ENCODE measurements at regions of chr10 and their contacts with region 1.

Region 1: DNA sequence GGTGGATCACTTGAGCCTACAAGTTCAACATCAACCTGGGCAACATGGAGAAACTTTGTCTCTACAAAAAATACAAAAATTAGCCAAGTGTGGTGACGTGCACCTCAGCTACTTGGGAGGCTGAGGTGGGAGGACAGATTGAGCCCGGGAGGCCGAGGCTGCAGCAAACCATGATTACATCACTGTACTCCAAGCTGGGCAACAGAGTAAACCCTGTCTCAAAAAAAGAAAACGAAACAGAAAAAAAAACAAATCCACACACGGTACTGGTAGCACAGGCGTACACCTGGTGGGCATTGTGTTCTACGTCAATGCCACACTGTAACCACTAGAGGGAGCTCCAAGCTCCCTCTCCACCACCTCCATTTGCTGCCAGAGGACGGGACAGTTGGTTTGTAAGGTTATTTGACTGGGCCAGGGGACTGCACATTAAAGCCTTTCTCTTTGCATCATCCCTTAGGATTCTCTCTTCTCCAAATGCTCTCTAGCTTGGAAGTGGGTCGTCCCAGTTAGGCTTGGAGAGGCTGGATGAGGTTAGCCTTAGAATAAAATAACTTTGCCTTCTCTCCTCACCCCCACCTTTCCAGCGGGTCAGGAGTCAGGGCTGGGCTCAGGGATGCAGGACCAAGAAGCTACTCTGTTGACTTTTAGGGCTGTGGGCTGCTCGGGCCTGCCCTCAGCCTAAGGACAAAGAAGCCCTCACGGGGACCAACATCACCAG is 130.8 kb downstream of the SORBS1 start:
- DNase-seq: no peak
- H3K4me3 ChIP-seq: no peak overlapping the region
- H3K27ac ChIP-seq: peak overlapping the region; percentile 43
- H3K4me1 ChIP-seq: peaks cover 11% of the 10 kb centered on the region
- H3K27me3 ChIP-seq: no peaks in the 10 kb centered on the region
- CTCF ChIP-seq: peak; percentile 93 to 96 (median 94)

Region 2: GRCh38 chr10:95341716-95342130 is 88.7 kb before region 1 on chr10:
- dilution Hi-C with region 1: no loop called
- DNase-seq: no peak
- H3K4me3 ChIP-seq: no peak overlapping the region
- H3K27ac ChIP-seq: no peak overlapping the region
- H3K4me1 ChIP-seq: peaks cover under 1% of the 10 kb centered on the region
- H3K27me3 ChIP-seq: no peaks in the 10 kb centered on the region
- CTCF ChIP-seq: no peak

Region 3: GRCh38 chr10:95374597-95375209 is 55.7 kb before region 1 on chr10:
- dilution Hi-C with region 1: no loop called
- DNase-seq: no peak
- H3K4me3 ChIP-seq: no peak overlapping the region
- H3K27ac ChIP-seq: no peak overlapping the region
- H3K4me1 ChIP-seq: no peaks in the 10 kb centered on the region
- H3K27me3 ChIP-seq: no peaks in the 10 kb centered on the region
- CTCF ChIP-seq: peak; percentile 95 to 100 (median 99)

Region 4: GRCh38 chr10:95391581-95392216 is 38.7 kb before region 1 on chr10:
- dilution Hi-C with region 1: no loop called
- DNase-seq: no peak
- H3K4me3 ChIP-seq: no peak overlapping the region
- H3K27ac ChIP-seq: no peak overlapping the region
- H3K4me1 ChIP-seq: peaks cover 16% of the 10 kb centered on the region
- H3K27me3 ChIP-seq: no peaks in the 10 kb centered on the region
- CTCF ChIP-seq: no peak

Region 5: DNA sequence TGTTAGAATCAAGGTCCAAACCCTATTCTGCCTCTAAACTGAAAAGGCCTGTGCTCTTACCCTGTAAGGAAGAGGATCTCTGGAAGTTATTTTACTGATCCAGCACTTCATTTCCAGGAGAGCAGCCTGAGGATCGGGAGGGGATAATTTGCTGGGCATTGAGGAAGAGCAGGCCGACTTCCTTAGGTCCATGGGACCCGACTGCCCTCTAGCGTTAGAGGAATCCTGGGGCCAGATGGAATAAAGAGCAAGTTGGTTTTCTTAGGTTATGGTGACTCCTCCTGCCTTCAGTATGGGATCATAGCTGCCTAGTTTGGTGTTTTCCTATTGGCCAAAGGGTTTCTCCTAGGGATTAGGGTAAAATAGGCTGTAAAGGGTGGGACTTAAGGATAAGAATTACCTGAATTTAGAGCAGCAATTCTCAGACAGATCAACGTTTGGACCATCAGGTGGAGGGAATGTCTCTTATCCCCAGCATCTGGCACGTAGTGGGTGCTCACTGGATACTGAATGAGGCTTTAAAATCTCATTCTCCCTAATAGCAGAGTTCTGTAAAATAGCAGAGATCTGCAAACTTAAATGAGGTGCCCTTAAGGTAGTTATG is 170.8 kb after region 1 on chr10:
- dilution Hi-C with region 1: loop called (anchors 25 kb)
- DNase-seq: peak; percentile 67
- H3K4me3 ChIP-seq: no peak overlapping the region
- H3K27ac ChIP-seq: no peak overlapping the region
- H3K4me1 ChIP-seq: no peaks in the 10 kb centered on the region
- H3K27me3 ChIP-seq: no peaks in the 10 kb centered on the region
- CTCF ChIP-seq: peak; percentile 95 to 98 (median 97)

Measured in keratinocyte (primary cell).